Right ventricle myocardium inferior (tissue), 1 donor: ENCODE measurements at regions of chr18 and their contacts with region 1.

Region 1: GRCh38 chr18:66280470-66280869 is 323.4 kb downstream of the CDH19 start:
- DNase-seq: no peak
- ATAC-seq: no peak

Region 2: DNA sequence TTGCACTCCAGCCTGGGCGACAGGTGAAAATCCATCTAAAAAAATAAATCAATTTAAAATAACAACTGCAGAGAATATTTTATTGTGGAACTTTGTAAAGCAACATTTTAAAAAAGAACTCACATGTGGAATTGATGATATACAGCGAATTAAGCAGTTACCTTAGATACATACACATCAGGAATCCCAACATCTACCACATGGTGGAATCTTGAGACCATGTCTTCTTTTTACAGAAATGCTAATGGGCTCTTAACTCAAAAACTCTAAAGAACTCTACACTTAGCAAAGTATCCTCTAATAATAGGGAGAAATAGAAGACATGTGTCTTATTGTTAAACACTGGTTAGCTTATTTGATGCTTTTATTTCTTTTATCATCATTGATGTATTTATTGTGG is 156.1 kb before region 1 on chr18:
- intact Hi-C with region 1: loop called (anchors 10 kb)
- DNase-seq: no peak
- ATAC-seq: no peak

Region 3: DNA sequence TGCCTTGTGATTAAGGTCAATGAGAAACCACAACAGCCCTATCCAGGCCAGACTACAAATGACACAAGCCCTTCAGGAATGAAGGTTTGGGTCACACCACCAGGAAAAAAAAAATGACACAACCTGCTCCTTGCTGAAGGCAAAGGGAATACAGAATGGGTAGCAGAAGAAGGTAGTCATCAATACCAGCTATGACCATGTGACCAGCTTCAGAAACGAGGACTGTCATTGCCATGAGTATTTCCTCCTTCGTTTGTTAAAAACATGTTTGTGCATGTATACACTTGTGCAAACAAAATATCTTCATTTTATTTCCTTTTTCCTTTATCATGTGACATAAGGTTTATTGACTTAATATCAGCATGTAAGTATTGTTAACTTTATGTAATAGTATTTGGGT is 96.8 kb after region 1 on chr18:
- intact Hi-C with region 1: no loop called
- DNase-seq: no peak
- ATAC-seq: no peak